ENCODE measurements at regions of chr10 and their contacts with region 1.

Region 1: GRCh38 chr10:88715517-88715916 is 9.5 kb downstream of the LIPK start:
- DNase-seq: no peak
- ATAC-seq: no peak
- H3K4me3 ChIP-seq: no peak overlapping the region
- H3K27ac ChIP-seq: no peak overlapping the region
- H3K4me1 ChIP-seq: no peaks in the 10 kb centered on the region
- H3K27me3 ChIP-seq: peaks cover 11% of the 10 kb centered on the region
- CTCF ChIP-seq: no peak
- POLR2A ChIP-seq: no peak
- RAD21 ChIP-seq: no peak

Region 2: DNA sequence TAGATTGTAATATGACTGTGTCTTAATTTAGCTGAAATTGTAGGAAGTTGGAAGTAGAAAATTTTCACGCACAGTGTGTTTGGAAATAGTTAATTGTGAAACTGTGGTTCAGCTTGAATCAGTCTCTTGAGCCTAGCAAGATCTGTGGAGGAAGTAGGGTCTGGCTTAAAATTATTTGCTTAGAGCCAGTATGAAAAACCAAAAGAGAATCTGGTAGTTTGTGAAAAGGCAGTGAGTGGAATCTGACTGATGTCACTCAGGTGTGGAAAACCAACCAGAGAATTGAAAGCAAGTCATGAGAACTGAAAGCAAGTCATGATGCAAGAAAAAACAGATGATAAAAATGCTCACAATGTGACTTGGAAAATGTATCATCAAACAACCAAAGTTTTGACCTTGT is 117.5 kb before region 1 on chr10:
- CTCF ChIA-PET with region 1: no interaction called
- POLR2A ChIA-PET with region 1: no interaction called
- dilution Hi-C with region 1: no loop called
- in situ Hi-C with region 1: no loop called
- intact Hi-C with region 1: loop called (anchors 10 kb)
- DNase-seq: no peak
- ATAC-seq: no peak
- H3K4me3 ChIP-seq: no peak overlapping the region
- H3K27ac ChIP-seq: no peak overlapping the region
- H3K4me1 ChIP-seq: no peaks in the 10 kb centered on the region
- H3K27me3 ChIP-seq: no peaks in the 10 kb centered on the region
- CTCF ChIP-seq: no peak
- POLR2A ChIP-seq: no peak
- RAD21 ChIP-seq: no peak

Region 3: GRCh38 chr10:88759366-88760101 is 44.0 kb after region 1 on chr10 and contains the start of gene LIPN:
- CTCF ChIA-PET with region 1: no interaction called
- POLR2A ChIA-PET with region 1: no interaction called
- dilution Hi-C with region 1: no loop called
- in situ Hi-C with region 1: no loop called
- intact Hi-C with region 1: loop called (anchors 5 kb)
- DNase-seq: no peak
- ATAC-seq: no peak
- H3K4me3 ChIP-seq: no peak within 1 kb of the TSS
- H3K27ac ChIP-seq: no peak within 1 kb of the TSS
- H3K4me1 ChIP-seq: no peaks in the 10 kb centered on the region
- H3K27me3 ChIP-seq: peaks cover 11% of the 10 kb centered on the region
- CTCF ChIP-seq: no peak
- POLR2A ChIP-seq: no peak
- RAD21 ChIP-seq: no peak
- total RNA-seq, gene LIPN: not detected in 2 replicates

Region 4: GRCh38 chr10:89029785-89030437 is 314.4 kb after region 1 on chr10:
- CTCF ChIA-PET with region 1: no interaction called
- POLR2A ChIA-PET with region 1: no interaction called
- dilution Hi-C with region 1: no loop called
- in situ Hi-C with region 1: no loop called
- intact Hi-C with region 1: no loop called
- DNase-seq: peak; percentile 84
- ATAC-seq: peak; percentile 57
- H3K4me3 ChIP-seq: no peak overlapping the region
- H3K27ac ChIP-seq: no peak overlapping the region
- H3K4me1 ChIP-seq: peaks cover 16% of the 10 kb centered on the region
- H3K27me3 ChIP-seq: no peaks in the 10 kb centered on the region
- CTCF ChIP-seq: peak; percentile 92
- POLR2A ChIP-seq: no peak
- RAD21 ChIP-seq: peak; percentile 95

Region 5: DNA sequence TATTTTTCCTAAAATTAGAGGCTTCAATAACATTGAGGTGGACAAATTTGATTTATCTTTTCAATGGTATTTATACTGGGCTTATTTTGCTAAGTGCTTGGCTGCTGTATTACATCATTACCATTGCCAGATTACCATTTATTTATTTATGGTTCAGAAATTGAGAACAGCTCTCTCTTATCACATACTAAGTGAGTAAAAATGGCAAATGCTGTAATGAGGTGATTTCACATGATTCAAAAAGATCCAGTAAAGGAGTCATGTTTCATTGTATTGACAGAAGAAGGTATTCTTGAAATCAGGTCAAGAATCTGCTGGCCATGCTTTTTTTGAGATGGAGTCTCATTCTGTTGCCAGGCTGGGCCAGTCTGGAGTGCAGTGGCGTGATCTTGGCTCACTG is 1308.4 kb after region 1 on chr10:
- CTCF ChIA-PET with region 1: no interaction called
- POLR2A ChIA-PET with region 1: no interaction called
- dilution Hi-C with region 1: no loop called
- in situ Hi-C with region 1: no loop called
- intact Hi-C with region 1: no loop called
- DNase-seq: no peak
- ATAC-seq: no peak
- H3K4me3 ChIP-seq: no peak overlapping the region
- H3K27ac ChIP-seq: no peak overlapping the region
- H3K4me1 ChIP-seq: no peaks in the 10 kb centered on the region
- H3K27me3 ChIP-seq: no peaks in the 10 kb centered on the region
- CTCF ChIP-seq: no peak
- POLR2A ChIP-seq: no peak
- RAD21 ChIP-seq: no peak

Measured in IMR-90 (cell line).